A549 (cell line): ENCODE measurements at regions of chr1 and their contacts with region 1.

Region 1: DNA sequence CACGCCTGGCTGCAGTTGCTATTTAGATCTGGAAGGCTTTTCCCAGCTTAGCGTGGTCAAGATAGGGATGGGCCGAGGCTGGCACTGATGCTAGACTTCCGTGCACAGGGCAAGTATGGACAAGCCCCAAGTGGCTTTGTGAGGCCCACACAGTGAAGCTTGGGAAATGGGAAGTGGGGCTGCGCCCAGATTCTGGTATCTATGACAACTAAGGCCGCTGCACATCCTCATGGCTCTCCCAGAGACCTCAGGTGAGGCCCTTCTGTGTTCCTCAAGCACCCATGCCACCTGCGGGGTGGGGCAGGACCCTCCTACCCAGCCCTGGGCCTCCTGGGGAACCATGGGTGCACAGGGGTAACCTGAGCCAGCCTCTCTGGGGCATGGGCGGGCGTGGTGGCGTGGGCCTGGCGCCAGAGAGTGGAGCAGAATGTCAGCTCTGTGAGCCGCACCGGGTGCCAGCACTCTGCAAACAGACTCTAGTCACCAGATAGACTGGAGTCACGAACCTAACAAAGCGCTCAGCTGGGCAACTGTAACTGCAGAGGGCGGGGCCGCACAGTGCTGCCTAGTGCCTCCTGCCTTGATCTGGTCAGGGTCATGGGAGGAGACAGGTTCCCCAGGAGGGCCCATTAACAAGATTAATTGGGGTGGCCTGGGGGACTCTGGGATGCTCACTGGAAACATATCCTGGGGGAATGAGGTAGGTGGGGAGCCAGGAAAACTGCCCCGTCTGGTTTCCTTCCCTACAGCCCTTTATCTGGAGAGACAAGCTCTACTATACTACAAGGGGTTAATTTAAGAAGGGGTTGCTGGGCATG is 46.5 kb downstream of the ELF3 start:
- DNase-seq: peak; percentile 94 to 98
- ATAC-seq: peak; percentile 87 to 91
- H3K4me3 ChIP-seq: no peak overlapping the region
- H3K27ac ChIP-seq: peak overlapping the region; percentile 97 to 98
- H3K4me1 ChIP-seq: peaks cover 58% of the 10 kb centered on the region
- CTCF ChIP-seq: no peak
- EP300 ChIP-seq: peak; percentile 69 to 89; a peak in 4 of 5 replicates
- POLR2A ChIP-seq: no peak
- RAD21 ChIP-seq: peak in 1 of 2 experiments; percentile 29; a peak in 2 of 5 replicates

Region 2: DNA sequence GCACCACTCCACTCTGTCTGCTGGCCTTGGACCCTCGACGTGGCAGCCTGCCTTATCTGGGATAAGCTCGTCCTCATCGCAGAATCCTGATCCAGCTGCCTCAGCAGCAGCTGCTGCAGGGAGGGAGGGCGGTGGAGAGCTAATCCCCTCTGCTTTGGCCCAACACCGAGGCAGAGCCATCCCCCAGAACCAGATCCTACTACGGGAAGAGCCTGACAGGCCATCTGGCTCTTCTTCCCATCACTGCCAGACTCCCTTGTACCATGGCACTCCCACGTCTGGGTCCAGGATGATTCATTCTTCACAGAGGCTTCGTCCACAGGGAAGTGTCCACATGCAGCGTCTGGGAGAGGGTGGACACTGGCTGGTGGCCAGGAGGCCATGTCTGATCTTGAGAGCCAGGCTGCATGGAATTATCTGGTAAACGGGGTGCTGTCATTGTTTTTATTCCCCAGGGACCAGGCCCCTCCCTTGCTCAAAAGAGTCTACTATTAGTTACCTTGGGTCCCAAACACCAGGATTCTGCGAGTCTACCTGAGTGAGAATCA is 788.2 kb before region 1 on chr1:
- CTCF ChIA-PET with region 1: no interaction called
- POLR2A ChIA-PET with region 1: no interaction called
- DNase-seq: peak; percentile 54 to 87
- ATAC-seq: peak; percentile 73 to 84
- H3K4me3 ChIP-seq: no peak overlapping the region
- H3K27ac ChIP-seq: peak overlapping the region; percentile 73 to 90
- H3K4me1 ChIP-seq: peaks cover 48% of the 10 kb centered on the region
- CTCF ChIP-seq: no peak
- EP300 ChIP-seq: no peak
- POLR2A ChIP-seq: no peak
- RAD21 ChIP-seq: no peak

Region 3: DNA sequence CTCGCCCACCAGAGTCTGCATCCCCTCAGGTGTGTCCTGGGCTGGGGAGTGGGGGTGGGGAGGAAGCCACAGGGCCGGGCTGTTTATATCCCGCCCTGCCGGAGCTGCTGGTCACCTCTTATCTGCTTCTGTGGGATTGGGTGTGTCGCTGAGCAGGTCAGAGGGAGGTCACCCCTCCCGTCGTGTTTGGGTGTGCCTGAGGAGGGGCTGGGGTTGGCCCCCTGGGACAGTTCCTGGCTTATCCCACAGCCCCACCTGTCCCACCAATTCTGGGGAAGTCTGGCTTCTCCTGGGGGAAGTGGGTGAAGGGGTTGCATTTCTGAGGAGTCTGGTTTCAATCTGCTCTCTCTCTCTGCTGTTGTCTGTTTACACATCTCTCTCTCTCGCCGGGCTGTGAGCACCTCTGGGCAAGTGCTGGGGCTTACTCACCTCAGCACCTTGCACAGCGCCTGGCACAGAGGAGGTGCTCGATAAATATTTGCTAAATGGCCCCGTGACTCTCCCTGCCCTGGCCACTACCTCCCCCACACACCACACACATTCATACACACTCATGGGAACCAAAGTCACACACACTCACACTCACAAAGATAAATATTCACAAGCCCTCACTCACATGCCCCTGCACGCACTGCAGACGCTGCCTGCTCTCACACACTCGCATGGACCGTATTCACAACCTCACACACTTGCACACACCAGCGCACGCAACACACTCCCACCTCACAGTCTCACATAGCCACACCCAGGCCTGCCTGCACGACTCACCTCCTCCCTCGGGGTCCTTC is 38.2 kb before region 1 on chr1:
- CTCF ChIA-PET with region 1: interaction called, 5 read pairs
- POLR2A ChIA-PET with region 1: interaction called, 11 read pairs
- DNase-seq: peak; percentile 81 to 99
- ATAC-seq: peak; percentile 71
- H3K4me3 ChIP-seq: peak overlapping the region; percentile 23; the same call in 2 of the 3 replicates
- H3K27ac ChIP-seq: peak overlapping the region; percentile 93 to 94
- H3K4me1 ChIP-seq: peaks cover 91% of the 10 kb centered on the region
- CTCF ChIP-seq: no peak
- EP300 ChIP-seq: peak; percentile 89 to 90; a peak in 3 of 5 replicates
- POLR2A ChIP-seq: no peak
- RAD21 ChIP-seq: peak; percentile 26 to 68; a peak in 4 of 5 replicates

Region 4: DNA sequence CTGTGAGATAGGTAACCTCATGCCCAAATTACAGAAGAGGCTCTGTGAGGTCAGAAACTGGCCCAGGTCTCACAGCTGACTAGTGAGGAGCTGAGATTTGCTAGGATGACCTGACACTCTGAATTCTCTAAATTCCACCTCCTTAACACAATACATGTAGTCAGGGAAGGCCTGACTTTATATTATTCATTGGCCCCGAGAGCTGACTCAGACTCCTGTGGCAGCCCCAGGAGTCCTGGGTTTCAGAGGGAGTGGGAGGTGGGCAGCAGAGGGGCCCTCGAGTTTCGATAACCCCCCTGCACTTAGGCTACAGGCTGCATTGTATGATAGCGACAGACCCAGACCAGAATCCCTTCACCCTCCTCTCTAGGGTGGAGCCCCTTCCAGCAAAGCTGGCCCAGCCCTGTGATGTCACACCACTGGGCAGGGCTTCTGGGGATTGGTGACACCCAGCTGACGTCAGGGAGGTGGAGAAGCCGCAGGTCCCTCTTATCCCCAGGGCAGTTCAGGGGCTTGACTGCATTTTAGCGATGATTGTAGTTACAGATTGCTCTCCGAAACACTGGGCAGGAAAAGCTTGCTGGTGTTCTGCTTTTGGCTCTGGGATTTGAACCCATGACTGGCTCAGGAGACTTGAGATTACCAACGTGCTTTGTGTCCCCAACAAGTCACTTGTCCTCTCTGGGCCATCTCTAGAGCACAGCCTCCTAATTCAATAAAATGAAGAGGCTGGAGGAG is 48.9 kb after region 1 on chr1:
- CTCF ChIA-PET with region 1: no interaction called
- POLR2A ChIA-PET with region 1: interaction called, 14 read pairs
- DNase-seq: peak; percentile 91 to 93
- ATAC-seq: peak; percentile 85 to 89
- H3K4me3 ChIP-seq: no peak overlapping the region
- H3K27ac ChIP-seq: peak overlapping the region; percentile 91 to 94
- H3K4me1 ChIP-seq: peaks cover 66% of the 10 kb centered on the region
- CTCF ChIP-seq: no peak
- EP300 ChIP-seq: no peak
- POLR2A ChIP-seq: no peak
- RAD21 ChIP-seq: 0 out of 5 replicates have a peak, but pooled peaks of 1 of the 2 experiments have one; percentile 11

Region 5: DNA sequence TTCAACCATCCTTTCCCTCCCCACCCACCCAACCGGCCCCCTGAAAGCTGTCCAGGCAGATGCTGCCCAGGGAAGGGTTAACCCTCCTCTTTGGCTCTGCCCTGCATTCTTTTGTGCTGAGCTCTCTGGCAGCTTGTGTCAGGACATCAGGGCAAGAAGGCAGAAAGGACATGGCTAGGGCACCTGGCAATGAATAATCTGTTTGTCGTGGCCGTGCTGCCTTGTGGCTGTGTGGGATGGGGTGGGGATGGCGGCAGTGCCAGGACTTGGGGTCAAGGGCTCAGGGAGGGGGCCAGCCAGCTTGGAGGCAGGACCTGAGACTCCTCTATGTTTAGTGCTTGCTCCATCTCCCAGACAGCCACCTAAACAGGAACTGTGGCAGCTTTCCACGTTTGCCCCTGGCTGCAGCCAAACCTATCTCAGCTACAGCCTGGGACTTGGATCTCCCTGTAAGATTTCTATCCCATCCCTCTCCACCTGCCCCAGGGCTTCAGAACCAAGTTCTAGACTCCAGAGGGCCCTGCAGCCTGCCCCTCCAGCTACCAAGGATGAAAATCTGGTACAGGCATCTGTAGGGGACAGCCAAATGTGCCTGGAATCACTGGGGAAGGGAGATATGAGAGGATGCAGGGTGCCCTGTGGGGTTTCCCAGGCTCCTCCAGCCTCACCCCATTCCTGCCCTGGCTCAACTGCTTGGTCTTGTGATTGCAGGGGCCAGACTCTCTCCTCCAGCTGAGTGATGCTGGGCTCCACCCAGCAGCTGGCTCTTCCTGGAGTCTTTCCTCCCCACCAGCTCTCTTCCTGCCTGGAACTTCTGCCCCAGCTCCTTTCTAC is 56.2 kb after region 1 on chr1:
- CTCF ChIA-PET with region 1: interaction called, 17 read pairs
- POLR2A ChIA-PET with region 1: interaction called, 3 read pairs
- DNase-seq: peak; percentile 62 to 85
- ATAC-seq: peak; percentile 76 to 80
- H3K4me3 ChIP-seq: no peak overlapping the region
- H3K27ac ChIP-seq: peak overlapping the region; percentile 88 to 94
- H3K4me1 ChIP-seq: peaks cover 73% of the 10 kb centered on the region
- CTCF ChIP-seq: no peak
- EP300 ChIP-seq: no peak; a peak in 1 of 5 replicates
- POLR2A ChIP-seq: no peak
- RAD21 ChIP-seq: peak; percentile 24 to 25; a peak in 3 of 5 replicates

Region 6: GRCh38 chr1:202348509-202349205 is 291.8 kb after region 1 on chr1 and contains the start of gene PPP1R12B:
- CTCF ChIA-PET with region 1: no interaction called
- POLR2A ChIA-PET with region 1: no interaction called
- DNase-seq: peak; percentile 86 to 99
- ATAC-seq: peak; percentile 98 to 99
- H3K4me3 ChIP-seq: peak within 1 kb of the TSS; percentile 86
- H3K27ac ChIP-seq: peak within 1 kb of the TSS; percentile 87 to 92
- H3K4me1 ChIP-seq: peaks cover 38% of the 10 kb centered on the region
- CTCF ChIP-seq: no peak
- EP300 ChIP-seq: no peak
- POLR2A ChIP-seq: peak; percentile 77
- RAD21 ChIP-seq: 0 out of 5 replicates have a peak, but pooled peaks of 1 of the 2 experiments have one; percentile 16
- polyA plus RNA-seq, gene PPP1R12B: 12.1 and 14.8 TPM in 2 replicates